HCT116 (cell line): ENCODE measurements at regions of chr5 and their contacts with region 1.

Region 1: DNA sequence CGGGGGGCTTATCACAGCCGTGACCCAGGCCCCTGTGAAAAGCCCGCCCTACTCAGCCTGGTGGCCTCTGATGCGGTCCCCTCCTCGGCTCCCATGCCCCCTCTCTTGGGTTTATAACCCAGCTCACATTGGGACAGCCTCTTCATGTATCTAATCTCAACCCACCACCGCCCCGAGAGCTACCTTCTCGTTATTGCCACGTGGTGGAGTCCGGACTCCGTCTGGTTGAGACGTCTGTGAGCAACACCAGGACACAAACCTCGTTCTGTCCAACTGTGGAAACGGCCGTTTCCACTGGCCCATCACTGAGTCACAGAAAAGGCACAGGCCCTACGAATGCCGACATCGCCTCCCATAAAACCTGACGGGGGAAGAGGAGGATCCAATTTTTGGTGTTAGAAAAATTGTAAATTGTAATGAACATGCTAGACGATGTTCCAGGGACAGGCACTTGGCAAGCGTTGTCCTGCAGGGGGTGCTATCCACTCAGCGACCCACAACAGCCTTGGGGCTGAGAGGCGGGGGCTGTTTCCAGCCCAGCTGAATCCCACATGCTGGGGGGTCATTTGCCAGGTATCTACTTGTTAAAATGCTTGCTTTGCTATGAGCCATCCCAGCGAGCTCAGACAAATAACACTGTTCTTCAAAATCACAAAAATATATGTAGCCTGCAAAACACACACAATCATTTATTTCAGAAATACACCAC is 37.3 kb upstream of the N4BP3 start:
- DNase-seq: peak; percentile 59
- ATAC-seq: peak; percentile 87
- H3K4me3 ChIP-seq: peak overlapping the region; percentile 27 to 48
- H3K27ac ChIP-seq: no peak overlapping the region
- H3K4me1 ChIP-seq: peaks cover 3 to 20% of the 10 kb centered on the region in 2 experiments; a peak in 3 of 4 replicates
- H3K27me3 ChIP-seq: no peaks in the 10 kb centered on the region
- CTCF ChIP-seq: peak; percentile 92 to 98 (median 95)
- POLR2A ChIP-seq: no peak
- RAD21 ChIP-seq: peak; percentile 95

Region 2: GRCh38 chr5:178058321-178059012 is 17.5 kb before region 1 on chr5:
- CTCF ChIA-PET with region 1: no interaction called
- POLR2A ChIA-PET with region 1: no interaction called
- RAD21 ChIA-PET with region 1: no interaction called
- intact Hi-C with region 1: no loop called
- DNase-seq: no peak
- ATAC-seq: no peak
- H3K4me3 ChIP-seq: no peak overlapping the region
- H3K27ac ChIP-seq: no peak overlapping the region
- H3K4me1 ChIP-seq: no peaks in the 10 kb centered on the region
- H3K27me3 ChIP-seq: no peaks in the 10 kb centered on the region
- CTCF ChIP-seq: no peak
- POLR2A ChIP-seq: no peak
- RAD21 ChIP-seq: no peak

Region 3: DNA sequence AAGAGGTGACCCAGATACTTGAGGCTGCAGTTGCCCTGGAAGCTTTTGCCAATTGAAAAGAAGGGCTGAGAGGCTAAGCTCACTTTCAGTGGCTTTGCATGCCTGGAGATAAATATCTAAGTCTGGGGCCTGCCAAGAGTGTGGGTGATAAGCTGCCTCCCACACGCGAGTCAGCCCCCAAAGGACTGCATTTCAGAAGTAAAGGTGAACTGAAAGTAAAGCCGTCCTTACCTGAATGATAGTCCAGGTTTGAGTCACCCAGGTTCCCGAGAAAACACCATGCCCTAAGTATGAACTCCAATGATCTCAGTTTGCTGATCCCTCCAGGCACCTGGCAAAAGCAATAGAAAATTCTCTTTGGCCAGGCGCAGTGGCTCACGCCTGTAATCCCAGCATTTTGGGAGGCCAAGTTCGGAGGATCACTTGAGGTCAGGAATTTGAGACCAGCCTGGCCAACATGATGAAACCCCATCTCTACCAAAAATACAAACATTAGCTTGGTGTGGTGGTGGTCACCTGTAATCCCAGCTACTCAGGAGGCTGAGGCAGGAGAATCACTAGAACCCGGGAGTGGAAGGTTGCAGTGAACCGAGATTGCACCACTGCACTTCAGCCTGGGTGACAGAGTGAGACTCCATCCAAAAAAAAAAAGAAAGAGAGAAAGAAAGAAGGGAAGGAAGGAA is 15.0 kb after region 1 on chr5:
- CTCF ChIA-PET with region 1: interaction called, 18 read pairs
- POLR2A ChIA-PET with region 1: no interaction called
- RAD21 ChIA-PET with region 1: no interaction called
- intact Hi-C with region 1: no loop called
- DNase-seq: no peak
- ATAC-seq: no peak
- H3K4me3 ChIP-seq: no peak overlapping the region
- H3K27ac ChIP-seq: no peak overlapping the region
- H3K4me1 ChIP-seq: no peaks in the 10 kb centered on the region
- H3K27me3 ChIP-seq: no peaks in the 10 kb centered on the region
- CTCF ChIP-seq: no peak
- POLR2A ChIP-seq: no peak
- RAD21 ChIP-seq: no peak

Region 4: GRCh38 chr5:178120868-178121357 is 44.9 kb after region 1 on chr5:
- CTCF ChIA-PET with region 1: interaction called, 10 read pairs
- POLR2A ChIA-PET with region 1: no interaction called
- RAD21 ChIA-PET with region 1: interaction called in 1 of 2 experiments, 10 read pairs
- intact Hi-C with region 1: no loop called
- DNase-seq: no peak
- ATAC-seq: peak; percentile 88
- H3K4me3 ChIP-seq: no peak overlapping the region
- H3K27ac ChIP-seq: no peak overlapping the region; the same call in 1 of the 2 replicates
- H3K4me1 ChIP-seq: no peaks in the 10 kb centered on the region
- H3K27me3 ChIP-seq: no peaks in the 10 kb centered on the region
- CTCF ChIP-seq: peak in 2 of 3 experiments; percentile 55 to 65; a peak in 4 of 6 replicates
- POLR2A ChIP-seq: no peak
- RAD21 ChIP-seq: no peak

Region 5: DNA sequence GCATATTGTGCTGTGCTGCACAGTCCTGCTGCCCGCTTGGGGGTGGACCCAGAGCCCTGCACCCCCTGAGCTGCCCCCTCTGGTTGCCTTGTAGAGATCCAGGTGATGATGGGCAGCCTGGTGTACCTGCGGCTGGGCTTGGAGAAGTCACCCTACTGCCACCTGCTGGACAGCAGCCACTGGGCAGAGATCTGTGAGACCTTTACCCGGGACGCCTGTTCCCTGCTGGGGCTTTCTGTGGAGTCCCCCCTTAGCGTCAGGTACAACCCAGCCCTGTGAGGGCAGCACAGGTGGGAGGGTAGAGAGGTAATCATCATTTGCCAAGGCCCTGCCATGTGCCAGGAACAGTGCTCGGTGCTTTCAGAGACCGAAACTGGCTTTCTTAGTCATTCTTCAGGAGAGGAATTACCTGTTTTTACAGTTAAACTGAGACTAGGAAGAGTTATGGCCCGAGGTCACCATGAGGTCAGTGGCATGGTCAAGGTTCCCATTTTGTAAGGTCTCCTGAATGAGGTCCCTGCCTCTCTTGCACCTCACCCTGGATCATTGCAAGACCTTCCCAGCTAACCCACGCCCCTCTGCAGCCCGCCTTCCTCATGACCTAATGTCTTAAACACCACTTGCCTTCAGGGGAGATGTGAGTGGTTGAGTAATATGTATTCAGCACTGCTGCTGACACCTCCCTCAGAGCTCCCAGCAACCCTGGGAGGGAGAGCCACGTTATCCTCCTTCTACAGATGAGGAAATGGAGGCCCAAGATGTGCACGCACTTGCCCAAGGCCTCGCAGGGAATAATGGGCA is 70.2 kb after region 1 on chr5:
- CTCF ChIA-PET with region 1: interaction called, 98 read pairs
- POLR2A ChIA-PET with region 1: interaction called, 7 read pairs
- RAD21 ChIA-PET with region 1: interaction called, 13 to 15 read pairs
- intact Hi-C with region 1: loop called (anchors 1 kb)
- DNase-seq: peak; percentile 59
- ATAC-seq: peak; percentile 92
- H3K4me3 ChIP-seq: no peak overlapping the region
- H3K27ac ChIP-seq: peak overlapping the region; percentile 47
- H3K4me1 ChIP-seq: peaks cover 0 to 10% of the 10 kb centered on the region in 2 experiments; a peak in 1 of 4 replicates
- H3K27me3 ChIP-seq: no peaks in the 10 kb centered on the region
- CTCF ChIP-seq: peak; percentile 84 to 93 (median 90)
- POLR2A ChIP-seq: no peak
- RAD21 ChIP-seq: peak; percentile 75

Region 6: GRCh38 chr5:178153573-178154343 is 77.8 kb after region 1 on chr5 and contains the start of gene NHP2:
- CTCF ChIA-PET with region 1: interaction called, 98 read pairs
- POLR2A ChIA-PET with region 1: interaction called, 4 read pairs
- RAD21 ChIA-PET with region 1: interaction called in 1 of 2 experiments, 7 read pairs
- intact Hi-C with region 1: no loop called
- DNase-seq: peak; percentile 98
- ATAC-seq: peak; percentile 95
- H3K4me3 ChIP-seq: peak within 1 kb of the TSS; percentile 78 to 86
- H3K27ac ChIP-seq: peak within 1 kb of the TSS; percentile 51
- H3K4me1 ChIP-seq: peaks cover 14 to 21% of the 10 kb centered on the region in 2 experiments; a peak in 3 of 4 replicates
- H3K27me3 ChIP-seq: no peaks in the 10 kb centered on the region
- CTCF ChIP-seq: no peak
- POLR2A ChIP-seq: peak; percentile 26
- RAD21 ChIP-seq: no peak
- total RNA-seq, gene NHP2: 260 TPM

Region 7: DNA sequence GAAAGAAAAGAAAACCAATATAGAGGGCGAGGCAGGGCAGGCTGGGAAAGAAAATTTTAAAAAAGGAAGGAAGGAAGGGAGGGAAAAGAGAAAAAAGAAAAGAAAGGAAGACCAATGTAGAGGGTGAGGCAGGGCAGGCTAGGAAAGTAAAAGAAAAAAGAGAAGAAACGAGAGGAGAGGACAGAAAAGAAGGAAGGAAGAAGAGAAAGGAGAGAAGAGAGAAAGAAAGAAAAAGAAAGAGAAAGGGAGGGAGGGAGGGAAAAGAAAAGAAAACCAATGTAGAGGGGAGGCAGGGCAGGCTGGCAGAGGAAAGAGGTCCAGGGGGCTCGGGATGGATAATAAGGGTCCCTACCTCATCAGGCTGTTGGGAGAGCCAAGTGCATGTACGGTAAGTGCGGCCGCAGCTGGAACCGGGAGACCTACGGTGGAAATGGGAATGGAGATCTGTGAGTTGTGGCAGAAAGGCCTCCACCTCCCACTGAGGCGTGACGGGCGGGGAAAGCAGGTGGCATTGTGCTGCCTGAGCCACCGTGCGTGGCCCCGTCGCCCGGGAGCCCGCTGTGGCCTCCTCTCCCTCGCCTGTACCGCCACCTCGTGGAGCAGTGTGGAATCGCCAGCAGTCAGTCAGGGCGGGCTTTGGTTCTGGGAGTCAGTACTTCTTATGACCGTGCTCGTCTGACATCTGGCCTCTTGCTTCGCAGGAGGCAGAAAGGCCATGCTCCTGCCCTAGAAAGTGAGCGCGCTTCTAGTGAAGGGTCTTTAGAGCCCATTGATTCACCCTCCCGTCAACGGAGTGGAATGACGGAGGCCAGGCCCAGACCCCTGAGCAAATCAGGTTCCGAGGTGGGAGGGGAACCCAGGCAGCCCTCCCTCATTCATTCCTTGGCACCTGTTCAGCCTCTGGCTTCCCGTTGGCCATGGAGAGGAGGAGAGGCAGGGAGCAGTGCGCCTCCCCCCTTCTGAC is 88.1 kb after region 1 on chr5:
- CTCF ChIA-PET with region 1: interaction called, 19 read pairs
- POLR2A ChIA-PET with region 1: no interaction called
- RAD21 ChIA-PET with region 1: no interaction called
- intact Hi-C with region 1: loop called (anchors 1 kb)
- DNase-seq: peak; percentile 62
- ATAC-seq: peak; percentile 98
- H3K4me3 ChIP-seq: peak overlapping the region; percentile 13
- H3K27ac ChIP-seq: no peak overlapping the region
- H3K4me1 ChIP-seq: peaks cover 2 to 11% of the 10 kb centered on the region in 2 experiments; a peak in 3 of 4 replicates
- H3K27me3 ChIP-seq: no peaks in the 10 kb centered on the region
- CTCF ChIP-seq: peak; percentile 97 to 98 (median 98)
- POLR2A ChIP-seq: no peak
- RAD21 ChIP-seq: peak; percentile 99

Region 8: GRCh38 chr5:178467568-178468195 is 391.7 kb after region 1 on chr5:
- CTCF ChIA-PET with region 1: no interaction called
- POLR2A ChIA-PET with region 1: no interaction called
- RAD21 ChIA-PET with region 1: no interaction called
- intact Hi-C with region 1: no loop called
- DNase-seq: no peak
- ATAC-seq: no peak
- H3K4me3 ChIP-seq: no peak overlapping the region
- H3K27ac ChIP-seq: no peak overlapping the region
- H3K4me1 ChIP-seq: no peaks in the 10 kb centered on the region
- H3K27me3 ChIP-seq: no peaks in the 10 kb centered on the region
- CTCF ChIP-seq: no peak
- POLR2A ChIP-seq: no peak
- RAD21 ChIP-seq: no peak

Region 9: GRCh38 chr5:178626484-178627258 is 550.7 kb after region 1 on chr5 and contains the start of gene CLK4:
- CTCF ChIA-PET with region 1: no interaction called
- POLR2A ChIA-PET with region 1: no interaction called
- RAD21 ChIA-PET with region 1: no interaction called
- intact Hi-C with region 1: loop called (anchors 5 kb)
- DNase-seq: peak; percentile 88
- ATAC-seq: peak; percentile 91
- H3K4me3 ChIP-seq: peak within 1 kb of the TSS; percentile 86 to 94
- H3K27ac ChIP-seq: peak within 1 kb of the TSS; percentile 84
- H3K4me1 ChIP-seq: peaks cover 11 to 30% of the 10 kb centered on the region in 2 experiments
- H3K27me3 ChIP-seq: no peaks in the 10 kb centered on the region
- CTCF ChIP-seq: no peak
- POLR2A ChIP-seq: peak; percentile 77
- RAD21 ChIP-seq: no peak
- total RNA-seq, gene CLK4: 9.8 TPM